Activated T-helper 2 cell treated with anti-CD3 and anti-CD28 coated beads, Interferon-gamma antibody, Interleukin-2, Interleukin-4, amounts not matched to agents 10 μg/mL and 5 μg/mL and 100 μg/mL, durations not matched to agents 14 hours and 24 hours and 36 hours (primary cell): ENCODE measurements at regions of chr1 and their contacts with region 1.

Region 1: GRCh38 chr1:32650752-32651460 is at the start of gene RBBP4:
- DNase-seq: peak; percentile 98
- H3K4me3 Mint-ChIP-seq: peak within 1 kb of the TSS; percentile 93
- H3K27ac Mint-ChIP-seq: peak within 1 kb of the TSS; percentile 100
- H3K4me1 Mint-ChIP-seq: peaks cover 36% of the 10 kb centered on the region
- H3K27me3 Mint-ChIP-seq: no peaks in the 10 kb centered on the region
- total RNA-seq, gene RBBP4: 325 TPM in 2 replicates

Region 2: DNA sequence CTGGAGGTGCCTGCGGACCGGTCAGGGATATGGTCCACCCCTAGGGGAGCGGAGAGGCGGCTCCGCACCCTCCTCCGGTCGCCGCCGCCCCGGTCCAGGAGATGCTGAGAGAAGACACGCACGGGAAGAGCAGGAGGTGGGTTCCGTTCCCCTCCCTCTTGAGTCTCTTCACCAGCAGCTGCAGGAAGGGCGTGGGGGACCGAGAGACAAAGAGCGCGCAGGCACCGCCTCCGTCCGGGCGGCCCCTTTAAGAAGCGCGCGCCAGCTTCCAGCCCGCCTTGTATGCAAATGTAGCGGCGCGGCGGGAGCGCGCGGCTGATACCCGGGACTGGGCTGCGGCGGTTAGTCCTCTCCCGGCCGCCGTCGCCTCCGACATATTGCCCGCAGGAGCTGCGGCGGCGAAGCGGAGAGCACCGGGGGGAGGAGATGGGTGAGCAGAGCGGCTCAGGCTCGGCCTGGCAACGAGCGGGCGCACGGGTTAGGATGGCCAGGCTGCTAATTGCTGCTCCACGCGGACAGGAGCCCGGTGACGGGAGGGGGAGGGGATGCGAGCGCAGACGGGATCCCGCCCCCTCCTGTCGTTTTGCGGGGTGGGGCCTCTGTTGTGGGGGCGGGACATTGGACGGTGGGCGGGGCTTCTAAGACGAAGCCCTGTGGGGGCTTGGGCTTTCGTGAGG is 578.1 kb before region 1 on chr1 and contains the start of gene TMEM39B:
- intact Hi-C with region 1: loop called (anchors 1 kb)
- DNase-seq: peak; percentile 94
- H3K4me3 Mint-ChIP-seq: peak within 1 kb of the TSS; percentile 87
- H3K27ac Mint-ChIP-seq: peak within 1 kb of the TSS; percentile 85
- H3K4me1 Mint-ChIP-seq: peaks cover 32% of the 10 kb centered on the region
- H3K27me3 Mint-ChIP-seq: no peaks in the 10 kb centered on the region
- total RNA-seq, gene TMEM39B: 32.5 and 34.5 TPM in 2 replicates

Region 3: DNA sequence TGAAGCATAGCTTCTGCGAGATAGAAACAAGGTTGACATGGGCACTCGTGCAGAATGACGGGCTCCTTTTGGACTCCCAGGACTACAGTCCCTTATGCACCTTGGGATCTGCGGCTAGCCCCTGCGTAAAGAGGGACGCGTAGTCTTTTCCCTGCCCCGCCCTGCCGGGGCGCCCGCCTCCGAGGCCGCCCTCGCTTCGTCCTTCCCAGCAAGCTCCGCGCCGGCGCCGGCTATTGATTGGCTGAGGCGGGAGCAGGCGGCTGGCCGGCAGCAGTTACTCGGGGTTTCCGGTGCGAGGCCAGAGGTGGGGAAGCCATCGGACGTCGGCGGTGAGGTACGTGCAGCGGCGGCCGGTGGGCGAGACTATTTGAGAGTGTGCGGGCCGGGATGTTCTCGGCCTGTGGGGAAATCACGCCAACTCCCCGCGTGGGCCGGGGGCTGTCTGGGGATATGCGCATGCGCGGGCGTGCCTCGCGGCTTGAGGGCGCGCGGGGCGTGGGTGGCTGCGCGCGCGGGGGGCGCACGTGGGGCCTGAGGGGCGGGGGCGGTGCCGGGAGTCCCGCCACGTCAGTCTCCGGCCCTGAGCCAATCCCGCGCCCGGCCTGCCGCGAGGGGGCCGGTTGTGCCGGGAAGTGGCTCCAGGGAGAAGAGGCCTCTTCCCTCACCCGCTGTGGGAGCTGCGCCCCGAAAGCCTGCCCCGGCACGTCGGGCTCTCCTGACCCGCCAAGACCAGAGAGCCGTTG is 471.3 kb before region 1 on chr1 and contains the start of gene TXLNA:
- intact Hi-C with region 1: loop called (anchors 2 kb)
- DNase-seq: peak; percentile 87
- H3K4me3 Mint-ChIP-seq: peak within 1 kb of the TSS; percentile 97
- H3K27ac Mint-ChIP-seq: peak within 1 kb of the TSS; percentile 98
- H3K4me1 Mint-ChIP-seq: peaks cover 34% of the 10 kb centered on the region
- H3K27me3 Mint-ChIP-seq: no peaks in the 10 kb centered on the region
- total RNA-seq, gene TXLNA: 98.6 and 101 TPM in 2 replicates

Region 4: GRCh38 chr1:32521165-32521564 is 129.7 kb before region 1 on chr1:
- intact Hi-C with region 1: loop called (anchors 2 kb)
- DNase-seq: no peak
- H3K4me3 Mint-ChIP-seq: peak overlapping the region; percentile 61
- H3K27ac Mint-ChIP-seq: no peak overlapping the region
- H3K4me1 Mint-ChIP-seq: peaks cover 9% of the 10 kb centered on the region
- H3K27me3 Mint-ChIP-seq: no peaks in the 10 kb centered on the region

Region 5: DNA sequence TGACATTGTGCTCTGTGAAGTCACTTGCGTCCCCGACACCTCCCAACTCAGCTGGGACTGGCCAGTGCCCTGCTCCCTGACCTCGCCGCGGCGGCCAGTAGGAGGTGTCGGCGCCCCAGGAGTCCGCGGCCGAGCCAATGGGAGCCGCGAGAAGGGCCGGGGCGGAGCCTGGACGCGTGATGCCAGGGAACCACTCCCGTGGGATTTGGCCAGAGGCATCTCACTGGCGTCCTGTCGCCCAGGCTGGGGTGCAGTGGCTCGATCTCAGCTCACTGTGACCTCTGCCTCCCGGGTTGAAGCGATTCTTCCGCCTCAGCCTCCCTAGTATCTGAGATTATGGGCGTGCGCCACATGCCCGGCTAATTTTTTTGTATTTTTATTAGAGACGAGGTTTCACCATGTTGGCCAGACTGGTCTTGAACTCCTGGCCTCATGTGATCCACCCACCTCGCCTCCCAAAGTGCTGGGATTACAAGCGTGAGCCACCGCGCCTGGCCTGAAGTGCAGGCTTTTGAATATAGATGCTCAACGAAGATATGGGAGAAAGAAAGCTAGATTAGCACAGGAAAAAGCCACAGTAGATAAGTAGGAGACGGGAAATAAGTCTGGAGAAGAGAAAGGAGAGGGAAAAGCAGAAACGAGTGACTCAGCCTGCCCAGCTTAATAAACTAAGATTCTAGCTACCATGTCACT is 38.6 kb before region 1 on chr1:
- intact Hi-C with region 1: no loop called
- DNase-seq: peak; percentile 40
- H3K4me3 Mint-ChIP-seq: peak overlapping the region; percentile 67
- H3K27ac Mint-ChIP-seq: no peak overlapping the region
- H3K4me1 Mint-ChIP-seq: peaks cover 2% of the 10 kb centered on the region
- H3K27me3 Mint-ChIP-seq: no peaks in the 10 kb centered on the region

Region 6: GRCh38 chr1:32622806-32623681 is 27.9 kb before region 1 on chr1:
- intact Hi-C with region 1: loop called (anchors 2 kb)
- DNase-seq: no peak
- H3K4me3 Mint-ChIP-seq: no peak overlapping the region
- H3K27ac Mint-ChIP-seq: peak overlapping the region; percentile 75
- H3K4me1 Mint-ChIP-seq: peaks cover 40% of the 10 kb centered on the region
- H3K27me3 Mint-ChIP-seq: no peaks in the 10 kb centered on the region

Region 7: GRCh38 chr1:32801096-32801715 is 150.3 kb after region 1 on chr1:
- intact Hi-C with region 1: loop called (anchors 1 kb)
- DNase-seq: no peak
- H3K4me3 Mint-ChIP-seq: peak overlapping the region; percentile 67
- H3K27ac Mint-ChIP-seq: peak overlapping the region; percentile 92
- H3K4me1 Mint-ChIP-seq: peaks cover 43% of the 10 kb centered on the region
- H3K27me3 Mint-ChIP-seq: no peaks in the 10 kb centered on the region

Region 8: GRCh38 chr1:32817159-32817814 is 166.4 kb after region 1 on chr1 and contains the starts of genes S100PBP and YARS1:
- intact Hi-C with region 1: loop called (anchors 2 kb)
- DNase-seq: peak; percentile 100
- H3K4me3 Mint-ChIP-seq: peak within 1 kb of the TSS; percentile 99
- H3K27ac Mint-ChIP-seq: peak within 1 kb of the TSS; percentile 96
- H3K4me1 Mint-ChIP-seq: peaks cover 46% of the 10 kb centered on the region
- H3K27me3 Mint-ChIP-seq: no peaks in the 10 kb centered on the region
- total RNA-seq, gene S100PBP: 50.2 and 50.5 TPM in 2 replicates
- total RNA-seq, gene YARS1: 155 and 172 TPM in 2 replicates